Right cardiac atrium (tissue), 5 donors: ENCODE measurements at regions of chr16 and their contacts with region 1.

Region 1: GRCh38 chr16:21554795-21555585 is 44.4 kb upstream of the METTL9 start:
- DNase-seq: peak; percentile 90 to 95 (median 95)
- ATAC-seq: peak; percentile 76 to 83
- H3K4me3 ChIP-seq: no peak overlapping the region
- H3K27ac ChIP-seq: no peak overlapping the region
- H3K4me1 ChIP-seq: no peaks in the 10 kb centered on the region
- H3K27me3 ChIP-seq: no peaks in the 10 kb centered on the region

Region 2: DNA sequence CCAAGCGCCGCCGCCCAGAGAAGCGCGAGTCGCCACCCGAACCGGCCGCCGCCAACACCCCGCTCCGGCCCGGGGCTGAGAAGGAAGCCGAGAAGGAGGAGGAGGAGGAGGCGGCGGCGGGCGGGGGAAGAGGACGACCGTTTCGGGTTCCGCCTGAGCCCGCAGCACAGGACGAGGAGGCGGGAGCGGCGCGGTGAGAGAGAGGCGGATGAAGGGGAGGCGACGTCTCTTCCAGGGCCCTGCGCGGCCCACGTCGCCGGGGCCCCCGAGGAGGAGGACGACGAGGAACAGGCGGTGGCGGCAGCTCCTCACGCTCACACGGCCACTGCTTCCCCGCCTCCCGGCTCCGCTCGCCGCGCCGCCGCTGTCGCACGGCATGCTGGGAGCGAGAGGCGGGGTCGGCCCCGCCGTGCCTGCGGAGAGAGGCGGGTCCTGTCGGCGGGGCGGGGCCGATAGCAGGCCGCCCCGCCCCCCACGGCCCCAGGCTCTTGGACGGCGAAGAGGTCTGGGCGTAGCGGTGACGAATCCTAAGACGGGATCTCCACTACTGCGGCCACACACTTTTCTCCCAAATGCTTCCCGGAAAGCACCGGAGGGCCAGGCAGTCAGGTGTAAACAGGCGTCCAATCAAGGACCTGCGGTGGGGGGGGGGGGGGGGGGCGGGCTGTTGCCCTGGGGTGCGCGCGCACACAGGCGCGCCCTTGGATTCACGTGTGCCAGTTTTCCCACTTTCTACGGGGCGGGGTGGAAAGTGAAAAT is 52.9 kb before region 1 on chr16:
- intact Hi-C with region 1: loop called in 1 of 4 experiments (anchors 10 kb)
- DNase-seq: peak; percentile 96 to 99 (median 98)
- ATAC-seq: peak; percentile 98
- H3K4me3 ChIP-seq: peak overlapping the region; percentile 86
- H3K27ac ChIP-seq: peak overlapping the region; percentile 94
- H3K4me1 ChIP-seq: peaks cover 2% of the 10 kb centered on the region
- H3K27me3 ChIP-seq: no peaks in the 10 kb centered on the region

Region 3: DNA sequence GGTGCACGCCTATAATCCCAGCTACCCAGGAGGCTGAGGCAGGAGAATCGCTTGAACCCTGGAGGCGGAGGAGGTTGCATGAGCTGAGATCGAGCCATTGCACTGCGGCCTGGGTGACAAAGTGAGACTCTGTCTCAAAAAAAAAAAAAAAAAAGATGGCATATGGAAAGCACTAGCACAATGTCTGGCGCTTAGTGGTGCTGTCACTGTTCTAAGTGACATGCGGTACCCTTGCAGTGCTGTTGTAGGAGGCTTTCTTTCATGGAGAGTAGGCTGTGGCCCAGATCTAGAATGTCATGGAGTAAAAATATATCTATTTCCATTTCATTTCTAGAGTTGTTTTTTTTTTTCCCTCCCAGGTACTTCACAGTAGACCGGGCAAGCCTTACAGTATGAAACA is 29.8 kb after region 1 on chr16:
- intact Hi-C with region 1: no loop called
- DNase-seq: no peak
- ATAC-seq: no peak
- H3K4me3 ChIP-seq: no peak overlapping the region
- H3K27ac ChIP-seq: no peak overlapping the region
- H3K4me1 ChIP-seq: no peaks in the 10 kb centered on the region
- H3K27me3 ChIP-seq: no peaks in the 10 kb centered on the region

Region 4: DNA sequence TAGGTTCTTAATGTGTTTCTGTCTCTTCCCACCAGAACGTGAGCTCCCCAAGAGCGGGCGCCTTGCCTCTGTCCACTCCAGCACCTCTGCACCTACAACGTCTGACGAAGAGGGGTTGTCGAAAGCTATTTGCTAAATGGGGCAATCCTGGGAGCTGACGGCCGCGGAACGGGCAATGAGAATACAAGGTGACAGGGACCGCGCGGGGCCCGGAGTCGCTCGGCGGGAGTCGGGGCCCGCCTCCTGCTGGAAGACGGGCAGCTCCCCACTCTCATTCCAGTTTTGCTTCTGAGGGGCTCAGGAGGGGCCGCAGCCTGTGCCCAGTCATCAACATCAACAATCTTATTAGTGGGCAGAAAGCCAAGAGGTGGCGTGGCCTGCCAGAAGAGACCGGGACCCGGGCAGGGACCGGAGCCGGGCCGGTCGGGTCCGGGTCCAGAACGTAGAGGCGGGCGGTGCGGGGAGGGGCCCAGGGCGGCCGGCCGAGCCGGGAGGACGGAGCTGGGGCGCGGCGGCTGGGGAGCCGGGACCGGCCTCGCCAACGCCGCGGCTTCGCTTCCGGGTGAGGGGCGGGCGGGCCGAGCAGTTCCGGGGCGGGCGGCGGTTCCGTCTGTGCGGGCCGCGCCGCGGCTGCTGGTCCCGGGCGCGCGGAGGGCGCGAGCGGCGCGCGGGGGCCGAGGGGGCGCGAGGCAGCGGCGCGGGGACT is 452.7 kb after region 1 on chr16 and contains the start of gene MOSMO:
- intact Hi-C with region 1: no loop called
- DNase-seq: peak; percentile 78 to 92 (median 92)
- ATAC-seq: peak; percentile 94 to 97
- H3K4me3 ChIP-seq: peak within 1 kb of the TSS; percentile 98
- H3K27ac ChIP-seq: peak within 1 kb of the TSS; percentile 80
- H3K4me1 ChIP-seq: peaks cover 2% of the 10 kb centered on the region
- H3K27me3 ChIP-seq: no peaks in the 10 kb centered on the region
- total RNA-seq, gene MOSMO: 10.6 to 14.8 (median 12.2) TPM